Tibial artery (tissue), 4 donors: ENCODE measurements at regions of chr5 and their contacts with region 1.

Region 1: GRCh38 chr5:141420855-141421496 is at the start of gene PCDHGA11:
- DNase-seq: peak in 1 of 2 donors; percentile 47
- H3K4me3 ChIP-seq: peak within 1 kb of the TSS; percentile 25 to 28
- H3K27ac ChIP-seq: no peak within 1 kb of the TSS
- H3K4me1 ChIP-seq: no peaks in the 10 kb centered on the region
- H3K27me3 ChIP-seq: no peaks in the 10 kb centered on the region
- CTCF ChIP-seq: peak in 1 of 2 experiments; percentile 12

Region 2: DNA sequence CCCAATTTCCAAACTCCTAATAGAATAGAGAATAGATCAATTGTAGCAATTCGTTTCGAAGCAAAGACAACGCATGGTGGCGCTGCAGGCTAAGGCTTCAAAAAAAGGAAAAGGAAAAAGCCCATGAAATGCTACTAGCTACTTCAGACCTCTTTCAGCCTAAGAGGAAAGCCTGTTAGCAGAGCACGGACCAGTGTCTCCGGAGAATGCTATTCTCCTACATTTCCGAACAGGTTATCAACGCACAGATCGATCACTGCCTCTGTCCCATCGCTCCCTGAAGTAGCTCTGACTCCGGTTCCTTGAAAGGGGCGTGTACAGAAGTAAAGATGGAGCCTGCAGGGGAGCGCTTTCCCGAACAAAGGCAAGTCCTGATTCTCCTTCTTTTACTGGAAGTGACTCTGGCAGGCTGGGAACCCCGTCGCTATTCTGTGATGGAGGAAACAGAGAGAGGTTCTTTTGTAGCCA is 175.7 kb before region 1 on chr5 and contains the start of gene PCDHB15:
- intact Hi-C with region 1: loop called (anchors 10 kb)
- DNase-seq: no peak
- H3K4me3 ChIP-seq: peak within 1 kb of the TSS; percentile 23 to 33
- H3K27ac ChIP-seq: no peak within 1 kb of the TSS
- H3K4me1 ChIP-seq: no peaks in the 10 kb centered on the region
- H3K27me3 ChIP-seq: no peaks in the 10 kb centered on the region
- CTCF ChIP-seq: no peak

Region 3: GRCh38 chr5:141866149-141867120 is 445.5 kb after region 1 on chr5:
- intact Hi-C with region 1: no loop called
- DNase-seq: no peak
- H3K4me3 ChIP-seq: no peak overlapping the region
- H3K27ac ChIP-seq: no peak overlapping the region
- H3K4me1 ChIP-seq: peaks cover 0 to 31% (median 0%) of the 10 kb centered on the region in 4 donors
- H3K27me3 ChIP-seq: no peaks in the 10 kb centered on the region
- CTCF ChIP-seq: no peak